IMR-90 (cell line): ENCODE measurements at regions of chr3 and their contacts with region 1.

Region 1: GRCh38 chr3:173395412-173396181 is 1.9 kb upstream of the NLGN1 start:
- DNase-seq: peak; percentile 74
- ATAC-seq: peak; percentile 83
- H3K4me3 ChIP-seq: peak overlapping the region; percentile 57
- H3K27ac ChIP-seq: peak overlapping the region; percentile 11
- H3K4me1 ChIP-seq: 0 out of 2 replicates have a peak, but pooled peaks cover 3% of the 10 kb centered on the region
- H3K27me3 ChIP-seq: peaks cover 3% of the 10 kb centered on the region; the same call in 1 of the 2 replicates
- CTCF ChIP-seq: no peak
- POLR2A ChIP-seq: peak; percentile 59; the same call in 1 of the 2 replicates
- RAD21 ChIP-seq: no peak

Region 2: DNA sequence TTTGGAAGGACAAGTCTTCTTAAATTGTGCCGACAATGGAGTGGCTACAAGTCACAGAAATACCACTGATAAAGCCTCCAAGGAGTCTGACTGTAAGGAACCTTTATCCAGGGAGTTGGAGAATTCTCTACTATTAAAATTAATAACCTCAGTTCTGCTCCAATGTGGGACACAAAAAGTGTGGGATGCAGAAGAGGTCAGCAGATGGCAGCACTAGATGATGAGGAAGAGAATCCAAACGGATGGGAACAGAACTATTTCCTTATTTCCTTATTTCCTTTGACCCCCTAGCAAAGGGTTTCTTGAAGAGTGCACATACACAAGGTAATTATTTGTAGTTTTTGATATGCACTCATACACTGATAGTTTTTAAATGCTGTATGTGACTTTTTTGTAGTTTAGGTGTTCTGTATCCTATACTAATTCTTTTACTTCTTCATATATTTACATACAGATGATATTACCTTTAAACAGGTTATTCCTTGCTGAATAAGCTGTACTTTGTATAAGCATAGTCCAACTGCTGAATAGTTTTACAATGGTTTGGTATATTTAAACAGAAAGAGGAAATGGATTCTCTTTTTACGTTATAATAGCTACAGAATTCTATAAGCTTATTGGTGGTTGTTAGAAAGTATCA is 23.6 kb before region 1 on chr3:
- CTCF ChIA-PET with region 1: no interaction called
- POLR2A ChIA-PET with region 1: interaction called, 6 read pairs
- dilution Hi-C with region 1: no loop called
- in situ Hi-C with region 1: no loop called
- intact Hi-C with region 1: loop called (anchors 1 kb)
- DNase-seq: peak; percentile 34
- ATAC-seq: peak; percentile 86
- H3K4me3 ChIP-seq: no peak overlapping the region
- H3K27ac ChIP-seq: no peak overlapping the region
- H3K4me1 ChIP-seq: no peaks in the 10 kb centered on the region
- H3K27me3 ChIP-seq: no peaks in the 10 kb centered on the region
- CTCF ChIP-seq: peak; percentile 63
- POLR2A ChIP-seq: no peak
- RAD21 ChIP-seq: peak; percentile 59

Region 3: GRCh38 chr3:173733029-173733652 is 337.5 kb after region 1 on chr3:
- CTCF ChIA-PET with region 1: no interaction called
- POLR2A ChIA-PET with region 1: no interaction called
- dilution Hi-C with region 1: no loop called
- in situ Hi-C with region 1: no loop called
- intact Hi-C with region 1: loop called (anchors 10 kb)
- DNase-seq: peak; percentile 64
- ATAC-seq: no peak
- H3K4me3 ChIP-seq: no peak overlapping the region
- H3K27ac ChIP-seq: no peak overlapping the region
- H3K4me1 ChIP-seq: peaks cover 2% of the 10 kb centered on the region; the same call in 1 of the 2 replicates
- H3K27me3 ChIP-seq: no peaks in the 10 kb centered on the region
- CTCF ChIP-seq: peak; percentile 50
- POLR2A ChIP-seq: no peak
- RAD21 ChIP-seq: peak; percentile 38

Region 4: DNA sequence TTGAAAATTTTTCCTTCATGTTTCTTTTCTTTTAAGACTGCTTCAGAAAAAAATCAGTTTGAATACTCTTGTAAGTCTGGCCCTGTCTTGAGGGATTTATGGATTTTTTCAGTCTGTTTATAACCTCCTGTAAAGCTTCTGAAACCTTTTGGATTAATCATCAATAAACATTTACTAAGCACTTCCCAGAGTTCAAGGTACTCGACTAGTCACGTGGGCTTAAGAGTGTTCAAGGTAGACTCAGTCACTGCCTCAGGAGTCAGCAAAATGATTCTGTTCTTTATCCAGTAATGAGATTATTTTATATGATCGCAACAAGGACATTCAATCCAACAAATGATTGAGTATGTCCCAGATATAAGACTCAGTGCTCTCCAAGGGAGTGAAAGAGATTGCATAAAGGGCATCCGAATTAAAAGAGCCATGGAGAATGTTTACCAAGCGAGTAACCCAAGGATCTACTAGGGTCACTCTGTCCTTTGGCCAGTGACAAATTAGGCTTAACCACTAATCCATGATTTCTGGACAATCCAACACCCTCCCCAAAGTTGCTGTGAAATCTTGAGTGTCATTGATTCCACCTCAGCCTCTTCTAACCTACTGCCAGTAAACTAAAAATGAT is 736.9 kb after region 1 on chr3:
- CTCF ChIA-PET with region 1: no interaction called
- POLR2A ChIA-PET with region 1: interaction called, 11 read pairs
- dilution Hi-C with region 1: no loop called
- in situ Hi-C with region 1: no loop called
- intact Hi-C with region 1: no loop called
- DNase-seq: peak; percentile 25
- ATAC-seq: peak; percentile 14; the same call in 1 of the 2 replicates
- H3K4me3 ChIP-seq: no peak overlapping the region
- H3K27ac ChIP-seq: no peak overlapping the region
- H3K4me1 ChIP-seq: peaks cover 3% of the 10 kb centered on the region; the same call in 1 of the 2 replicates
- H3K27me3 ChIP-seq: no peaks in the 10 kb centered on the region
- CTCF ChIP-seq: no peak
- POLR2A ChIP-seq: no peak
- RAD21 ChIP-seq: no peak

Region 5: DNA sequence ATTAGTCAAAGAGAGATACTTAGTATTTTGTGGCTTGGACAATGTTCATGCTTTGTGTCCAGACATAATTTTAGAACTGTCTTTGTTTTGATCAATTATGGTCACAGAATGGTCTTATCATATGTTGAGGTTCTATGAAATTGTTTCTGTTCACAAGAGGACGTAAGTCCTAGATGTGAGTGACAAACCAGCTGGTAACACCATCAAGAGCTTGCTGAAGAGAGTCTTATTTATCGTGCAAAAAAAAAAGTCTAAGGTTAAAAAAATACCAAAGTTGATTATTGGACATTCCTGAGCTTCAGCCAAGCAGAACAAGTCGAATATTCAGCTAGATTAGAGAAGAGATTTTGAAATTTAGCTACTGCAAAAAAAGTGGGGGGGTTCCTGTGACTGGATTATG is 967.7 kb after region 1 on chr3:
- CTCF ChIA-PET with region 1: no interaction called
- POLR2A ChIA-PET with region 1: no interaction called
- dilution Hi-C with region 1: no loop called
- in situ Hi-C with region 1: no loop called
- intact Hi-C with region 1: loop called (anchors 5 kb)
- DNase-seq: no peak
- ATAC-seq: no peak
- H3K4me3 ChIP-seq: no peak overlapping the region
- H3K27ac ChIP-seq: no peak overlapping the region
- H3K4me1 ChIP-seq: no peaks in the 10 kb centered on the region
- H3K27me3 ChIP-seq: no peaks in the 10 kb centered on the region
- CTCF ChIP-seq: no peak
- POLR2A ChIP-seq: no peak
- RAD21 ChIP-seq: no peak